Lower leg skin (tissue), 4 donors: ENCODE measurements at regions of chr14 and their contacts with region 1.

Region 1: GRCh38 chr14:23120541-23121251 is 1.6 kb upstream of the CEBPE start:
- DNase-seq: peak; percentile 90 to 98
- H3K4me3 ChIP-seq: no peak overlapping the region
- CTCF ChIP-seq: peak in 2 of 3 donors; percentile 98 to 100
- POLR2A ChIP-seq: no peak

Region 2: GRCh38 chr14:22929104-22929847 is 191.4 kb before region 1 on chr14 and contains the start of gene PRMT5:
- intact Hi-C with region 1: no loop called
- DNase-seq: peak; percentile 99 to 100
- H3K4me3 ChIP-seq: peak within 1 kb of the TSS; percentile 94
- CTCF ChIP-seq: peak in 1 of 3 donors; percentile 62
- POLR2A ChIP-seq: no peak
- total RNA-seq, gene PRMT5: 42.9 to 53.2 (median 48.3) TPM

Region 3: GRCh38 chr14:23186913-23187654 is 66.4 kb after region 1 on chr14:
- intact Hi-C with region 1: loop called (anchors 2 kb)
- DNase-seq: peak in 1 of 2 donors; percentile 51
- H3K4me3 ChIP-seq: no peak overlapping the region
- CTCF ChIP-seq: peak in 1 of 3 donors; percentile 96
- POLR2A ChIP-seq: no peak

Region 4: GRCh38 chr14:23366426-23366921 is 245.8 kb after region 1 on chr14:
- intact Hi-C with region 1: no loop called
- DNase-seq: peak; percentile 69 to 91
- H3K4me3 ChIP-seq: no peak overlapping the region
- CTCF ChIP-seq: no peak
- POLR2A ChIP-seq: no peak